Esophagus muscularis mucosa (tissue), 4 donors: ENCODE measurements at regions of chr11 and their contacts with region 1.

Region 1: GRCh38 chr11:61627567-61628445 is 46.9 kb upstream of the SYT7 start:
- DNase-seq: no peak
- H3K4me3 ChIP-seq: no peak overlapping the region
- H3K27ac ChIP-seq: no peak overlapping the region
- H3K4me1 ChIP-seq: peaks cover 7 to 19% (median 10%) of the 10 kb centered on the region in 4 donors
- H3K27me3 ChIP-seq: no peaks in the 10 kb centered on the region
- CTCF ChIP-seq: peak; percentile 45 to 65 (median 48)
- EP300 ChIP-seq: no peak
- POLR2A ChIP-seq: no peak

Region 2: DNA sequence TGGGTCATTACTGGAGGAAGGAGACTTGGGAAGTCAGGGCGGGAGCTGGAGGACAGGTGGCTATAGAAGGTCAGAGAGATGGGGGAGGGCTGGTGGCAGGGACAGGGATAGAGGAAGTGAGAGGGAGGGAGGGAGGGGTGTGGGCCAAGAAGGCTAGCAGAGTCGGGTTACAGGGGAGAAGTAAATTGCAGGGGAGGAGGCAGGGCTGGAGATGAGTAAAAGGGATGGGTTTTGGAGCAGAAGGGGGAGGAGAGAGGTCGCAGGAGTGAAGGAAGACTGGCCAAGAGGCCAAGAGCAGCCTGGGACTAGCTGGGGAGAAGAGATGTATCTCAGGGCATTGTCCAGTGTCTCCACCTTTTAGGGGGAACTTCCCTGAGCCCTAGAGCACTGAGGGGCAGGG is 86.2 kb before region 1 on chr11:
- intact Hi-C with region 1: loop called (anchors 10 kb)
- DNase-seq: no peak
- H3K4me3 ChIP-seq: no peak overlapping the region
- H3K27ac ChIP-seq: no peak overlapping the region
- H3K4me1 ChIP-seq: peaks cover 5 to 19% (median 9%) of the 10 kb centered on the region in 4 donors
- H3K27me3 ChIP-seq: peaks cover 0 to 48% (median 10%) of the 10 kb centered on the region in 4 donors
- CTCF ChIP-seq: no peak
- EP300 ChIP-seq: no peak
- POLR2A ChIP-seq: no peak